ENCODE measurements at regions of chr12 and their contacts with region 1.

Region 1: GRCh38 chr12:108542320-108542719 is 18.7 kb downstream of the SART3 start:
- DNase-seq: no peak
- ATAC-seq: no peak
- H3K4me3 ChIP-seq: no peak overlapping the region
- H3K27ac ChIP-seq: peak overlapping the region; percentile 88; the same call in 1 of the 2 replicates
- H3K4me1 ChIP-seq: peaks cover 23% of the 10 kb centered on the region
- H3K27me3 ChIP-seq: no peaks in the 10 kb centered on the region
- CTCF ChIP-seq: no peak
- EP300 ChIP-seq: no peak
- POLR2A ChIP-seq: no peak
- RAD21 ChIP-seq: no peak

Region 2: GRCh38 chr12:108483213-108484059 is 58.9 kb before region 1 on chr12:
- CTCF ChIA-PET with region 1: no interaction called
- POLR2A ChIA-PET with region 1: no interaction called
- RAD21 ChIA-PET with region 1: no interaction called
- SMC1A ChIA-PET with region 1: no interaction called
- in situ Hi-C with region 1: no loop called
- intact Hi-C with region 1: no loop called
- DNase-seq: no peak
- ATAC-seq: no peak
- H3K4me3 ChIP-seq: no peak overlapping the region
- H3K27ac ChIP-seq: no peak overlapping the region
- H3K4me1 ChIP-seq: no peaks in the 10 kb centered on the region
- H3K27me3 ChIP-seq: no peaks in the 10 kb centered on the region
- CTCF ChIP-seq: no peak
- EP300 ChIP-seq: no peak
- POLR2A ChIP-seq: no peak
- RAD21 ChIP-seq: no peak

Region 3: DNA sequence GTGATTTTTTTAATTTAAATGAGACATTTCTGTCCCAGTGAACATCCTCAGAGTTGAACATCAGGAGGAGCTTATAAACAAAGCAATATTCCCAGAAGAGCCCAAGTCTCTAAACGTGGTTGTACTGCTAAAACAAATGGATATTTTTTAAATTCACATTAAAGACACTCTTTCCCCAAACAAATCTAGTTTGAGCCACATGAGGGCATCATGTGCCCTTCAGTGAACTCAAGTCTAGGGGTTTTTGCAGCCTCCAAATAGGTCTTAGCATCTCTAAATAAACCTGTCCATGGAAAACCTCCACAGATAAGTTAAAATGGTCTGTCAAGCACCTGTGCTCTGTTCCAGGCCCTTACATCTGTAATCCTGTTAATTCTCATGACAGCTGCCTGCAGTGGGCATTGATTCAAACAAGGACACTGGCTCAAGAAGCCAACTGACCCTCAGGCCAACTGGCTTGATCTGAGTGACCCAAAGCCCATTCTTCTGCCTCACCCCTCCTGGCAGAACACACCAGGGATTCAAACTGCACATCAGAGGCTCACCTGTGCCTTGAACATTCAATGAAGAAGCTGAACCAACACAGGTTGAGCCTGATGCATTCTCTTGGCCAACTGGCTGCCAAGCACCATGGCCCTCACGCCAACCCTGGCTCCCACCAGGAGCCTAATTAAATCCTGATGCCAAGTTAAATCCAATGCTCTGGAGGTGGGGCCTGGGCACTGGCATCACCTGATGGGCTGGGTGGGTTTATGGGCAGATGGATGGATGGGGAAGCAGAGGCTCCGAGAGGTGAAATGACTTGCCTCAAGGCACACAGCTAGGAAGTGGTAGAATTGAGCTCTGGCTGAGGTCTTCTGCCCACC is 28.7 kb after region 1 on chr12:
- CTCF ChIA-PET with region 1: interaction called, 9 read pairs
- POLR2A ChIA-PET with region 1: interaction called, 13 read pairs
- RAD21 ChIA-PET with region 1: interaction called, 10 read pairs
- SMC1A ChIA-PET with region 1: interaction called, 3 read pairs
- in situ Hi-C with region 1: no loop called
- intact Hi-C with region 1: no loop called
- DNase-seq: no peak
- ATAC-seq: no peak
- H3K4me3 ChIP-seq: no peak overlapping the region
- H3K27ac ChIP-seq: peak overlapping the region; percentile 100
- H3K4me1 ChIP-seq: peaks cover 89% of the 10 kb centered on the region
- H3K27me3 ChIP-seq: no peaks in the 10 kb centered on the region
- CTCF ChIP-seq: peak; percentile 42 to 53 (median 49); a peak in 4 of 6 replicates
- EP300 ChIP-seq: 0 out of 4 replicates have a peak, but pooled peaks of 1 of the 2 experiments have one; percentile 10
- POLR2A ChIP-seq: no peak
- RAD21 ChIP-seq: peak; percentile 66

Measured in GM12878 (cell line).